ENCODE measurements at regions of chr20 and their contacts with region 1.

Region 1: DNA sequence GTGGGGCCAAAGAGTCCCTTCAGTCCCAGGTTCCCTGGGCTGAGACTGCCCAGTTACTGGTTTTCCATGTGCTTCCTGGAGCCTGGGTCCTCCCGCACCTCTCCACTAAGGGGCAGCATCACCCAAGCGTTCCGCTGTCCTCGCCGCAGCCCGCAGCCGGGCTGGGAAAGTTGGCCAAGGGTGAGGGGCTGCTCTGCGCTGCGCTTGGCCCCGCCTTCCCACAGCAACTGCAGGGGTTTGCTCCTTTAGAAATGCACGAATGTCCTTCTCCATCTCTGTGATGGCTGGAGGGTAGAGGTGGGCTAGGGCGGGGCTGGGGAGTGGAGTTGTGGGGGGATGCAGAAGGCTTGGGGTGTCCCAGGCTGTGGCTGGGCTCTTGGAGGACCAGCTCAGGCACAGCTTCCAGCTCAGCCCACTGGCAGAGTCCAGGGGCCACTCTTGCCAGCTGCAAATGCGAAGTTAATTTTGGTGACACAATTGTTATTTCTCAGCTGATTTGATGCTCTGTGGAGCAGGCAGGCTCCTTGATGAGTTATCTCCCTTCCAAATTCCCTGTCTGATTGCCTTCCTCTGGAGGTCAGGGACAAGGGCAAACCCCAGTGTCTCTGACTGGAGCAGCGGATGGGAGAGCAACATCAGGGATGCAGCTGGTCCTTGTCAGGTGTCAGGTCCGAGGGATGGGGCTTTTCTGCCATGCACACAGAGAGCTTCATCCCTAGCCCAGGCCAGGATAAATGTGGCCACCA is 63.2 kb downstream of the NOL4L start:
- DNase-seq: peak; percentile 51 to 79
- ATAC-seq: peak; percentile 87 to 96
- H3K4me3 ChIP-seq: no peak overlapping the region
- H3K27ac ChIP-seq: no peak overlapping the region
- H3K4me1 ChIP-seq: no peaks in the 10 kb centered on the region
- CTCF ChIP-seq: peak; percentile 93
- EP300 ChIP-seq: no peak
- POLR2A ChIP-seq: no peak
- RAD21 ChIP-seq: peak; percentile 97 to 98

Region 2: GRCh38 chr20:32497589-32498224 is 24.2 kb before region 1 on chr20:
- CTCF ChIA-PET with region 1: interaction called, 13 read pairs
- POLR2A ChIA-PET with region 1: no interaction called
- DNase-seq: no peak
- ATAC-seq: no peak
- H3K4me3 ChIP-seq: no peak overlapping the region
- H3K27ac ChIP-seq: no peak overlapping the region
- H3K4me1 ChIP-seq: no peaks in the 10 kb centered on the region
- CTCF ChIP-seq: no peak
- EP300 ChIP-seq: no peak
- POLR2A ChIP-seq: no peak
- RAD21 ChIP-seq: no peak

Region 3: GRCh38 chr20:32535953-32536823 is 14.2 kb after region 1 on chr20:
- CTCF ChIA-PET with region 1: interaction called, 31 read pairs
- POLR2A ChIA-PET with region 1: no interaction called
- DNase-seq: peak; percentile 41 to 44
- ATAC-seq: peak; percentile 55 to 72
- H3K4me3 ChIP-seq: peak overlapping the region; percentile 54
- H3K27ac ChIP-seq: peak overlapping the region in 1 of 2 experiments; percentile 70; a peak in 4 of 6 replicates
- H3K4me1 ChIP-seq: peaks cover 9% of the 10 kb centered on the region; the same call in 2 of the 3 replicates
- CTCF ChIP-seq: no peak
- EP300 ChIP-seq: no peak
- POLR2A ChIP-seq: no peak
- RAD21 ChIP-seq: no peak

Region 4: DNA sequence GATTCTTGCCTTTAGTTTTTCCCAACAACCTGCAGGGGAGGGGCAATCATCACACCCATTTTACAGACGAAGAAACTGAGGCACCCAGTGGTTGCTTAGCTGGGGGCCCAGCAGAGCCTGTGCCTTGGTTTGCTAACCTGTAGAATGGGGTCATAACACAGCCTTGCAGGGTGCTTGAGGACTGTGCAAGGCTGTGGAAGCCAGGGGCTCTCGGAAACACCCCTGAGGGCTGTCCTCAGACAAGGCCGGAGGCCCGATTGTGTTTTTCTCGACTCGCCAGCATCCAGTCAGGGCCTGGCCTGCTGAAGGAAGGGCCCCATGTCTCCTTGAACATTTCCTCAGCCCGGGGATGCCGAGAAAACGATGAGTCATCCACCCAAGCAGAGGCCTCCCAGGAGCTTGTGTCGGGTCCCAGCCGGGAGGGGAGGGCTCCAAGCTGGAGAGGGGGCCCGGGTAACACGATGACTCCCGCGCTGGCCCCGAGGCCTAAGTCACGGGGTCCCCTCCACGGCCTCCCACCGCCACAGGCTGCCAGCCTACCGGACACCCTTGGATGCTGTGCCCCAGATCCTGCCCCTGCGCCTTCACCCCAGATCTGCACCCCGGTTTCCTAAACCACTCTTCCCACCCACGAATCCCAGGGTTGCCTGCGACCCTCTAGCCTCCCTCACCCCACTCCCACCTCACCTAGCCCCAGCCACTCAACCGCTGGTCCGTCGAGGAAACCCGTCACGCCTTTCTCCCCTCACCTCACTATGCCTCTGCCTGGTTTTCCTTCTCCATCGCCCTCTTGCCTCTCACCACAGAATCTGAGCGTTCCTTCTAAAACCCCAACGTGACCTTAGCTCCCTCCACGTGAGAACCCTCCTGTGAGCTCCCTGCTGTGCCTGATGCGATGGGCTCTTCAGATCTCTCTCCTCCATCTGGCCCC is 52.6 kb after region 1 on chr20:
- CTCF ChIA-PET with region 1: interaction called, 30 read pairs
- POLR2A ChIA-PET with region 1: no interaction called
- DNase-seq: peak; percentile 60 to 69
- ATAC-seq: peak; percentile 37 to 73; a peak in 4 of 6 replicates
- H3K4me3 ChIP-seq: no peak overlapping the region
- H3K27ac ChIP-seq: peak overlapping the region; percentile 65 to 84; a peak in 5 of 6 replicates
- H3K4me1 ChIP-seq: peaks cover 11% of the 10 kb centered on the region
- CTCF ChIP-seq: no peak
- EP300 ChIP-seq: no peak
- POLR2A ChIP-seq: no peak
- RAD21 ChIP-seq: no peak

Region 5: GRCh38 chr20:32652739-32653526 is 131.0 kb after region 1 on chr20:
- CTCF ChIA-PET with region 1: interaction called, 670 read pairs
- POLR2A ChIA-PET with region 1: interaction called, 3 read pairs
- DNase-seq: peak; percentile 76 to 85
- ATAC-seq: peak; percentile 96 to 98
- H3K4me3 ChIP-seq: no peak overlapping the region
- H3K27ac ChIP-seq: peak overlapping the region in 1 of 2 experiments; percentile 49; a peak in 1 of 6 replicates
- H3K4me1 ChIP-seq: no peaks in the 10 kb centered on the region
- CTCF ChIP-seq: peak; percentile 94
- EP300 ChIP-seq: no peak
- POLR2A ChIP-seq: no peak
- RAD21 ChIP-seq: peak; percentile 99 to 100

Measured in A549 (cell line).